ENCODE measurements at regions of chr3 and their contacts with region 1.

Region 1: GRCh38 chr3:140941434-140942220 is at the start of gene SLC25A36:
- DNase-seq: peak; percentile 83 to 96 (median 94)
- ATAC-seq: peak; percentile 99
- H3K4me3 ChIP-seq: peak within 1 kb of the TSS; percentile 69
- H3K4me3 Mint-ChIP-seq: peak within 1 kb of the TSS; percentile 90 to 100 (median 96)
- H3K27ac ChIP-seq: peak within 1 kb of the TSS; percentile 89
- H3K27ac Mint-ChIP-seq: peak within 1 kb of the TSS; percentile 94 to 100 (median 99)
- H3K4me1 ChIP-seq: peaks cover 9 to 14% of the 10 kb centered on the region in 2 donors
- H3K4me1 Mint-ChIP-seq: peaks cover 31 to 52% (median 47%) of the 10 kb centered on the region in 7 donors
- H3K27me3 ChIP-seq: no peaks in the 10 kb centered on the region
- H3K27me3 Mint-ChIP-seq: peaks cover 0 to 30% (median 0%) of the 10 kb centered on the region in 5 donors
- total RNA-seq, gene SLC25A36: 43.4 to 121 (median 66.9) TPM

Region 2: GRCh38 chr3:139343895-139344856 is 1597.5 kb before region 1 on chr3 and contains the start of gene MRPS22:
- CTCF ChIA-PET with region 1: no interaction called
- POLR2A ChIA-PET with region 1: no interaction called
- intact Hi-C with region 1: loop called in 1 of 2 experiments (anchors 1 kb)
- DNase-seq: peak; percentile 52 to 87 (median 85)
- ATAC-seq: peak; percentile 97
- H3K4me3 ChIP-seq: peak within 1 kb of the TSS; percentile 86
- H3K4me3 Mint-ChIP-seq: peak within 1 kb of the TSS in 2 of 10 donors; percentile 59 to 72
- H3K27ac ChIP-seq: peak within 1 kb of the TSS; percentile 88
- H3K27ac Mint-ChIP-seq: peak within 1 kb of the TSS in 3 of 9 donors; percentile 15 to 64 (median 31)
- H3K4me1 ChIP-seq: peaks cover 15% of the 10 kb centered on the region in 2 donors
- H3K4me1 Mint-ChIP-seq: peaks cover 7 to 19% (median 10%) of the 10 kb centered on the region in 7 donors
- H3K27me3 ChIP-seq: no peaks in the 10 kb centered on the region
- H3K27me3 Mint-ChIP-seq: peaks cover 0 to 9% (median 6%) of the 10 kb centered on the region in 5 donors
- total RNA-seq, gene MRPS22: 26.2 to 37.2 (median 36.3) TPM

Region 3: GRCh38 chr3:140292684-140293083 is 648.9 kb before region 1 on chr3:
- CTCF ChIA-PET with region 1: no interaction called
- POLR2A ChIA-PET with region 1: no interaction called
- intact Hi-C with region 1: no loop called
- DNase-seq: no peak
- ATAC-seq: no peak
- H3K4me3 ChIP-seq: no peak overlapping the region
- H3K4me3 Mint-ChIP-seq: no peak overlapping the region
- H3K27ac ChIP-seq: no peak overlapping the region
- H3K27ac Mint-ChIP-seq: no peak overlapping the region
- H3K4me1 ChIP-seq: no peaks in the 10 kb centered on the region
- H3K4me1 Mint-ChIP-seq: no peaks in the 10 kb centered on the region
- H3K27me3 ChIP-seq: no peaks in the 10 kb centered on the region
- H3K27me3 Mint-ChIP-seq: peaks cover 2 to 26% (median 12%) of the 10 kb centered on the region in 5 donors

Region 4: DNA sequence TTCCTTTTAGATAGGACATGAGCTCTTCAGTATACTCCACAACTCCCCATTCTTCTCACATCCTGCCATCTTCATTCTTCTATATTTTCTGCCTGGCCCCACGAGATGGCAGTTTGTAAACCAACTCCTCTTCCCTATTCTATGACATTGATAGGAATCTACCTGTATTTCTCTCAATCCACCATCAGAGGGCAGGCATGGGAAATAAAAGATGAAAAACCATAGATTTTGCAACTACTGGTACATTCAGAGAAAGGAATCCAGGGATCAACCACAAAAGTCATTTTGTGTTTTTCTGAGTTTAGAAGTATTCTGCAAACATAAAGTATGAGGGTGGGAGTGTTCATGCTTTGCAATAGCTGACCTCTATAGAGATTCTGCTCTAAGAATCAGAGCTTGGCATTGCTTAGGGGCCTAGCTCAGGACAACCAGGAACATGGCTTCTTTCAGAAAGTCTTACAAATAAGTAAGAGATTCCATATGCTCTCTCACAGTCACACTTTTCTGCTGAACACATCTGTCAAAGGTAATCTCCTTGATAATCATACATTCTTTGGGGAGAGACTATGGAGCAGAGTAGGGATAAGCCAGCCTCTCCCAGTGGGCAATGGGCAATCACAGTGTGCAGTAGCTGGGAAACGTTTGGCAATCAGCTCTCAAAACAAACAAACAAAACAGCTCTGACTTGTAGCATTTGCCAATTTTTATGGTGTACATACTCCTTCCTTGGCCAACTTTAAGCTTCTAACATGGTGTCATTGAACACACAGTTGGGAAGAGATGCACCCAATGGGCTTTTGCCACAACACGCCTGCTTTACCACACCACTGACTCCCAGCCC is 43.1 kb before region 1 on chr3:
- CTCF ChIA-PET with region 1: no interaction called
- POLR2A ChIA-PET with region 1: no interaction called
- intact Hi-C with region 1: loop called (anchors 1 kb)
- DNase-seq: peak in 7 of 9 donors; percentile 12 to 60 (median 38)
- ATAC-seq: peak; percentile 83
- H3K4me3 ChIP-seq: no peak overlapping the region
- H3K4me3 Mint-ChIP-seq: no peak overlapping the region
- H3K27ac ChIP-seq: no peak overlapping the region
- H3K27ac Mint-ChIP-seq: no peak overlapping the region
- H3K4me1 ChIP-seq: no peaks in the 10 kb centered on the region
- H3K4me1 Mint-ChIP-seq: peaks cover 0 to 2% (median 0%) of the 10 kb centered on the region in 7 donors
- H3K27me3 ChIP-seq: no peaks in the 10 kb centered on the region
- H3K27me3 Mint-ChIP-seq: peaks cover 22 to 35% (median 25%) of the 10 kb centered on the region in 5 donors

Region 5: GRCh38 chr3:141231101-141231935 is 289.7 kb after region 1 on chr3 and contains the start of gene PXYLP1:
- CTCF ChIA-PET with region 1: interaction called, 6 read pairs
- POLR2A ChIA-PET with region 1: no interaction called
- intact Hi-C with region 1: loop called (anchors 1 kb)
- DNase-seq: peak; percentile 83 to 97 (median 91)
- ATAC-seq: peak; percentile 98
- H3K4me3 ChIP-seq: peak within 1 kb of the TSS; percentile 72
- H3K4me3 Mint-ChIP-seq: peak within 1 kb of the TSS; percentile 85 to 94 (median 92)
- H3K27ac ChIP-seq: peak within 1 kb of the TSS; percentile 85
- H3K27ac Mint-ChIP-seq: peak within 1 kb of the TSS; percentile 91 to 98 (median 98)
- H3K4me1 ChIP-seq: peaks cover 6 to 33% of the 10 kb centered on the region in 2 donors
- H3K4me1 Mint-ChIP-seq: peaks cover 50 to 66% (median 54%) of the 10 kb centered on the region in 7 donors
- H3K27me3 ChIP-seq: no peaks in the 10 kb centered on the region
- H3K27me3 Mint-ChIP-seq: peaks cover 0 to 6% (median 0%) of the 10 kb centered on the region in 5 donors
- total RNA-seq, gene PXYLP1: 18.6 to 40.9 (median 23.2) TPM

Region 6: DNA sequence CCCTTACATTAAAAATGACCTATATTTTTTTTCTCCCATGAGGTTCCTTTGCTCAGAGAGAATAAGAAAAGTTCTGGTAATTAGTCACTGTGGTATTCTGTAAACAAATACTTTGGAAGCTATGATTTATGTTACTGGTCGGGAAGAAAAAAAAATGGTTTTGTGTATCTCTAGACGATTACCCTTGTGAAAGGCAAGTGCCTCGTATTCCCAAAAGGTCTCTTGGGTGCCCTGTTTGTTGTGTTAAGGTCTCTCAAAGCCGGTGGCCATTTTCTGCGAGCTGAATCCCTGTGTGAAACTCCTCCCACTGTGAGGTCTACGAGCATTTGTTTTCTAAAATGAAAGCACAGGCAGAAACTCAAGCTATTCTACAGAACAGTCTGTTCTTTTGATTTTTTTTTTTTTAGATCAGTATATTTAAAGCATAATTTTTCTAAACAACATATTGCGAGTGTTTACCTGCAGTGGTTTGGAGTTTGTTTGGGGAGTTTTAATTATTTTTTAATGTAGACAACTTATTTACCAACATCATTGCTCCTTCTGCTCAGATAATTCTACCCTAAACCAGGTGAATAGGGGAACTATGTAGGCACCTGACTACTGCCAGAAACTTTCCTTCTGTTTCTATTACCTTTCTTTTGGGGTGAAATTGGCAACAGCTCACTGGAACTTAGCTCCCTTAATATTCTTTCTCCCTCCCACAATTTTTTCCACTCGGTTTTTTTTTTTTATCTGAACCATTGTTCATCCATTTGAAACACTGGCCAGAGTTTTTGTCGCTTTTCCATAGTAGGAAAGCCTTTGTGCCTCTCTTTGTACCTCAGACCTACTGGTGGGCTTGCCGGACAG is 470.7 kb after region 1 on chr3:
- CTCF ChIA-PET with region 1: no interaction called
- POLR2A ChIA-PET with region 1: no interaction called
- intact Hi-C with region 1: loop called in 1 of 2 experiments (anchors 5 kb)
- DNase-seq: peak in 7 of 9 donors; percentile 54 to 76 (median 69)
- ATAC-seq: peak; percentile 78
- H3K4me3 ChIP-seq: peak overlapping the region; percentile 26
- H3K4me3 Mint-ChIP-seq: peak overlapping the region; percentile 62 to 91 (median 86)
- H3K27ac ChIP-seq: peak overlapping the region; percentile 83
- H3K27ac Mint-ChIP-seq: peak overlapping the region; percentile 96 to 100 (median 99)
- H3K4me1 ChIP-seq: peaks cover 59 to 74% of the 10 kb centered on the region in 2 donors
- H3K4me1 Mint-ChIP-seq: peaks cover 52 to 87% (median 74%) of the 10 kb centered on the region in 7 donors
- H3K27me3 ChIP-seq: no peaks in the 10 kb centered on the region
- H3K27me3 Mint-ChIP-seq: no peaks in the 10 kb centered on the region

Region 7: DNA sequence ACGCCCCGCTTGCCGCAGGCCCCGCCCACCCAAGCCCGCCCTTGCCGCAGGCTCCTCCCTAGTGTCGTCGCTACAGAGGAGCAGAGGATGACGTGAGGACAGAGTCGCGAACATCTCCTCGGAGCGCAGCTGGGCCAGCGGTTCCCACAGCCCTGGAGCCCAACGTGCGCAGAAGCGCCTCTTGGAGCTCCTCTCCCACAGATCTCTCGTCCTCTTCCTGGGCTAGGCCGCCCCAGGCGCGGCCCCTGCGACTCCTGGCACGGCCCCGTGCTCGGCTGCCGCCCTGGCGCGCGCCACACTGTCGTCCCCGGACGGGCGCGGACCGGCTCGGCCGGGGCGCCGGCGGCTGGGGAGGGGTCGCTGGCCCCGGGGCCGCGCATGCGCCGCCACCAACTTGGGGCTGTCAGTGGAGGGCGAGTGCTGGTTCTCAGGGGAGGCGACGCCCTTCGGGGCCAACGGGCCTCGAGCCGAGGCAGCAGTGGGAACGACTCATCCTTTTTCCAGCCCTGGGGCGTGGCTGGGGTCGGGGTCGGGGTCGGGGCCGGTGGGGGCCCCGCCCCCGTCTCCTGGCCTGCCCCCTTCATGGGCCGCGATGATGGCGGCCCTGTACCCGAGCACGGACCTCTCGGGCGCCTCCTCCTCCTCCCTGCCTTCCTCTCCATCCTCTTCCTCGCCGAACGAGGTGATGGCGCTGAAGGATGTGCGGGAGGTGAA is 1782.5 kb after region 1 on chr3 and contains the start of gene TRPC1:
- CTCF ChIA-PET with region 1: no interaction called
- POLR2A ChIA-PET with region 1: no interaction called
- intact Hi-C with region 1: loop called in 1 of 2 experiments (anchors 2 kb)
- DNase-seq: peak in 8 of 9 donors; percentile 58 to 83 (median 78)
- ATAC-seq: peak; percentile 97
- H3K4me3 ChIP-seq: peak within 1 kb of the TSS; percentile 76
- H3K4me3 Mint-ChIP-seq: peak within 1 kb of the TSS; percentile 80 to 92 (median 88)
- H3K27ac ChIP-seq: peak within 1 kb of the TSS; percentile 76
- H3K27ac Mint-ChIP-seq: peak within 1 kb of the TSS; percentile 31 to 94 (median 88)
- H3K4me1 ChIP-seq: peaks cover 0 to 4% of the 10 kb centered on the region in 2 donors
- H3K4me1 Mint-ChIP-seq: peaks cover 5 to 20% (median 11%) of the 10 kb centered on the region in 7 donors
- H3K27me3 ChIP-seq: peaks cover 0 to 2% of the 10 kb centered on the region in 2 donors
- H3K27me3 Mint-ChIP-seq: peaks cover 20 to 67% (median 22%) of the 10 kb centered on the region in 5 donors
- total RNA-seq, gene TRPC1: 1.5 to 7.6 (median 5.3) TPM